ENCODE measurements at regions of chr22 and their contacts with region 1.

Region 1: GRCh38 chr22:38540701-38541100 is 29.3 kb downstream of the DMC1 start:
- DNase-seq: no peak
- H3K4me3 ChIP-seq: no peak overlapping the region
- H3K27ac ChIP-seq: no peak overlapping the region
- H3K4me1 ChIP-seq: no peaks in the 10 kb centered on the region
- H3K27me3 ChIP-seq: no peaks in the 10 kb centered on the region
- CTCF ChIP-seq: no peak
- POLR2A ChIP-seq: no peak

Region 2: DNA sequence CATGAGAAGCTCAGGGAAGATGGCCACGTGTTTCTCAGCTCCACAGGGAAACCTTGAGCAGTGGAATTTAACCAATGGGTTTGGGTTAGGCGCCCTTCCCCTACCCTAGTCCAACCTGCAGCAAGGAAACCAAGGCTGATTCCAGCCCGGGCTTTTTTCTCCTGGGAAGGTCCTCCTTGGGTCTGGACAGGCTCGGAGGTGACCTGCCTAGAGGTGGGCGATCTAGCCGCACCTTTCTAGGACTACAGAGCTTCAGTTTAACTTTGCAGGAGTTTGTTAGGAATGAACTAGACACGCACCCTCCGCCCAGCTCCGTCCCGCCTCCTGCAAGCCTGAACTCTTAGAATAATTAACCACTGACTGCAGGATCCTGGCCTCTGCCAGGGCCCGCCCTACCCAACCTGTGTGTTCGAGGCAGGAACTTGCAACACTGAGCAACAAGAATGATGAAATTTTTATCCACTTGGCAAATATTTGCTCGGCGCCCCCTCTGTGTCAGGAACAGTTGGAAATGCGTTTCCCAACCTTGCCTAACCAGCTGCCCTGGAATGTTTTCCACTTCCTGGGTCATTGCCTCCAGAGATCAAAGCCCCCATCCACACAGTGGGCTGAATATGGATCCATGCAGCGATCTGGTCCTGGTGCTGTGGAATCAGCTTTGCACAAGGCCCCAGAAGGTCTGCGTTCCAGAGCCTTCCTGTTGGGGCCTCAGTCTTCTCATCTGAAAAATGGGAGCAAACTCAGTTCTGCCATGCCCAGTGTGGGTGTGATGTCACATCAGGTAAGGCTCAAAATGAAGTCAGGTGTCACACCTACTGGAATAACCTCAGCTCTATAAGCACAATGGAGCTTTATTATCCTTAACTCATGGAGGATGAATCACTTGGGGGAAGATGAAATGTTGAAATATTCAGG is 1507.9 kb before region 1 on chr22:
- intact Hi-C with region 1: no loop called
- DNase-seq: peak in 1 of 2 donors; percentile 72
- H3K4me3 ChIP-seq: no peak overlapping the region
- H3K27ac ChIP-seq: peak overlapping the region in 1 of 2 donors; percentile 22
- H3K4me1 ChIP-seq: peaks cover 0 to 8% of the 10 kb centered on the region in 2 donors
- H3K27me3 ChIP-seq: no peaks in the 10 kb centered on the region
- CTCF ChIP-seq: no peak
- POLR2A ChIP-seq: no peak

Region 3: GRCh38 chr22:38442967-38443627 is 97.6 kb before region 1 on chr22:
- intact Hi-C with region 1: no loop called
- DNase-seq: no peak
- H3K4me3 ChIP-seq: no peak overlapping the region
- H3K27ac ChIP-seq: no peak overlapping the region
- H3K4me1 ChIP-seq: no peaks in the 10 kb centered on the region
- H3K27me3 ChIP-seq: peaks cover 0 to 8% of the 10 kb centered on the region in 2 donors
- CTCF ChIP-seq: no peak
- POLR2A ChIP-seq: no peak

Region 4: DNA sequence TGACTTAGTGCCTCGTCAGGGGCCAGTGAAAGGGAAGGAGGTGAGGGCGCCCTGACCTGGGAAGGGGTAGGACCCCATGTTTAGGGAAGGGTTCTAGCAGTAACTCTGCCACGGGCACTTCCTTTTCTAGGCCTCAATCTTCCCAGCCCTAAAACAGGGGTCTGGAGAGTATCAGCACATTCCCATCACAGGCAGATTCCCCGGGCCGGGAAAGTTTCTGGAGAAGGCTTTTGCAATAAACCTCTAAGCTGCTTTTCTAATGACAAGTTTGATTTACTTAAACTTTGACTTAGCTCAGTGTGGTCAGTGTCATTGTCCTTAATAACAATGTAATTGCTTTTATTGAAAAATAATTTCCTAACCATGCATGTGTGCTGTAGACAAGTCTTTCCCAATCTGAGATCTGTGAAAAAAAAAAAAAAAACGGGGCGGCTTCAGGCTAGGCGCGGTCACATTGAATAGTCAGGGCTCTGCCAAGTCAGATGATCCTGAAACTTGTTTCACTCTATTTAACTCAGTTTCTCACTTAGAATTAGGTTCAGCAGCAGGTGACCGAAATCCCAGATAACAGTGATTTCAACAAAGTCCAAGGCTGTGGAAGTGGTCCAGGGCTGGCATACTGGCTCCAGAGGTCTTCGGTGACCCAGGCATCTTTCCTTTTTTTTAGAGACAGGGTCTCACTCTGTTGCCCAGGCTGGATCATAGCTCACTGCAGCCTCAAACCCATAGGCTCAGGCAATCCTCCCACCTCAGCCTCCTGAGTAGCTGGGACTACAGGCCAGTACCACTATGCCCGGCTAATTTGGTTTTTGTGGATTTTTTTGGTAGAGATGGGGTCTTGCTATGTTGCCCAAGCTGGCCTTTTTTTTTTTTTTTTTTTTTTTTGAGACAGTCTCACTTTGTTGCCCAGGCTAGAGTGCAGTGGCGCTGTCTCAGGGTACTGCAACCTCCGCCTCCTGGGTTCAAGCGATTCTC is 839.3 kb after region 1 on chr22:
- intact Hi-C with region 1: loop called (anchors 5 kb)
- DNase-seq: no peak
- H3K4me3 ChIP-seq: no peak overlapping the region
- H3K27ac ChIP-seq: no peak overlapping the region
- H3K4me1 ChIP-seq: no peaks in the 10 kb centered on the region
- H3K27me3 ChIP-seq: no peaks in the 10 kb centered on the region
- CTCF ChIP-seq: no peak
- POLR2A ChIP-seq: no peak

Measured in breast epithelium (tissue), 4 donors.